H1 (cell line): ENCODE measurements at regions of chr15 and their contacts with region 1.

Region 1: DNA sequence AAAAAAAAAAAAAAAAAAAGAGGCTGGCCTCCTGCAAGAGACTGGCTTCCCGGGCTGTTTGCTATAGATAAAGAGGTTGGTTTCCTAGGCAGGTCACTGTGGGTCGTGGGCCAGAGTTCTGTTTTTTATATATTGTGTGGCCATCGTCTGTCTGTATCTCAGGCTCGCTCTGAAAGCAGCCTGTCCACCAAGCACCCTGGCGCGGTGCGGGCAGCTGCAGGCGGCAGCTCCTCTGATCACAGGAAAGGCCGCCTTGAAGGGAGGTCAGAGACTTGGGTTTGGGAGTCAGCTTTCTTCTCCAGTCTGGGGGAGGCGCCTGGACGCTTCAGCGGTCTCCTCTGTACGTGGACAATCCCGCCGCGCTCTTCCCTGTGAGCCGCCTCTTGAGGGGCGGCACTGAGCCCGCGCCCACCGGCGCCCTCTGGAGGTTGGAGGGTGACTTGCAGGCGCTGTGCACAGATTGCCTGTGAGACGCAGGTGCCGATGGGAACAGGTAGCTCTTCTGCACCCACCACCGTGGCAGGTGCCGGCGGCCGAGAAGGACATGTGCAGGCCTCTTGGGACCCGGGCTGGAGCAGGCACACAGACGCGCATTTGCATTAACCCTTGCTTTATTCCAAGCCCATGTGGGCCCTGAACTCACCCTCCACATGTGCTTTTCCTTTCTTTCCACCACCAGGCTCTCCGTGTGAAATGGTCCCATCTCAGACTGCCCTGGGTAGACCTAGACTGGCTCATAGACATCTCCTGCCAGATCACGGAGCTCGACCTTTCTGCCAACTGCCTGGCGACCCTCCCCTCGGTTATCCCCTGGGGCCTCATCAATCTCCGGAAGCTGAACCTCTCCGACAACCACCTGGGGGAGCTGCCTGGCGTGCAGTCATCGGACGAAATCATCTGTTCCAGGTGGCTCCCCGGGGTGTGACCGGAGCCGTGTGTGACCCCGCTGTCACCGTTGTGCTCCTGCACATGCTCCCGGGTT is 89.3 kb downstream of the LRRK1 start:
- DNase-seq: peak; percentile 61 to 99
- H3K4me3 ChIP-seq: peak overlapping the region; percentile 32 to 61 (median 54)
- H3K27ac ChIP-seq: no peak overlapping the region
- H3K4me1 ChIP-seq: peaks cover 0 to 4% (median 0%) of the 10 kb centered on the region in 4 experiments; a peak in 2 of 7 replicates
- H3K27me3 ChIP-seq: peaks cover 0 to 6% (median 0%) of the 10 kb centered on the region in 4 experiments; a peak in 3 of 7 replicates
- CTCF ChIP-seq: peak; percentile 96 to 98 (median 97)
- EP300 ChIP-seq: no peak
- POLR2A ChIP-seq: no peak
- RAD21 ChIP-seq: peak; percentile 48 to 67

Region 2: DNA sequence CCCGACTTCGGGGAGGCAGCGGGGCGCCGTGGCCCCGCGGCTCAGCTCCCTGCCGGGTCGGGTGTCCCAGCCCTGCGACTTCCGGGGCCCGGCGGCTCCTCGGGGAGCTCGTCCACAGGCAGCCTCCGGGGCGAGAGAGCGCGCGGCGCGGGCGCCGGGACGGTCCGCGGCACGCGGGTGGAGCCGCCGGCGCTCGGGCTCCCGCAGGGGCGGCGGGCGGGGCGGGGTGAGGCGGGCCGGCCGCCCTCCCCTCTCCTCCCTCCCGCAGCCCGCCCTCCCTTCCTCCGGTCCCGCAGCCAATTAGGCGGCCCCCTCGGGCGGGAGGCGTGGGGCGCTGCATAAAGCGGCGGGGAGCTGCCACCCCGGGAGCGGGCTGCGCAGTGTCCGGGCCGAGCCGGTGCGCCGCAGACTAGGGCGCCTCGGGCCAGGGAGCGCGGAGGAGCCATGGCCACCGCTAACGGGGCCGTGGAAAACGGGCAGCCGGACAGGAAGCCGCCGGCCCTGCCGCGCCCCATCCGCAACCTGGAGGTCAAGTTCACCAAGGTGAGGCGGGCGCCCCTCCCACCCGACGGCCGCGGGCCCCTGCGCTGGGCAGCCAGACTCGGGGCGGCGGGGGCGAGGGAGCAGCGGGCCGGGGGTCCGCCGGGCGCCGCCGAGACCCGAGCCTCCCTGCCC is 128.8 kb before region 1 on chr15 and contains the start of gene ALDH1A3:
- CTCF ChIA-PET with region 1: interaction called, 23 read pairs
- POLR2A ChIA-PET with region 1: no interaction called
- DNase-seq: no peak
- H3K4me3 ChIP-seq: peak within 1 kb of the TSS; percentile 37 to 59 (median 46)
- H3K27ac ChIP-seq: no peak within 1 kb of the TSS
- H3K4me1 ChIP-seq: peaks cover 0 to 13% (median 8%) of the 10 kb centered on the region in 4 experiments; a peak in 5 of 7 replicates
- H3K27me3 ChIP-seq: peaks cover 16 to 52% (median 48%) of the 10 kb centered on the region in 4 experiments
- CTCF ChIP-seq: no peak
- EP300 ChIP-seq: no peak
- POLR2A ChIP-seq: no peak
- RAD21 ChIP-seq: no peak
- total RNA-seq, gene ALDH1A3: 5.5 and 5.7 TPM in 2 replicates

Region 3: DNA sequence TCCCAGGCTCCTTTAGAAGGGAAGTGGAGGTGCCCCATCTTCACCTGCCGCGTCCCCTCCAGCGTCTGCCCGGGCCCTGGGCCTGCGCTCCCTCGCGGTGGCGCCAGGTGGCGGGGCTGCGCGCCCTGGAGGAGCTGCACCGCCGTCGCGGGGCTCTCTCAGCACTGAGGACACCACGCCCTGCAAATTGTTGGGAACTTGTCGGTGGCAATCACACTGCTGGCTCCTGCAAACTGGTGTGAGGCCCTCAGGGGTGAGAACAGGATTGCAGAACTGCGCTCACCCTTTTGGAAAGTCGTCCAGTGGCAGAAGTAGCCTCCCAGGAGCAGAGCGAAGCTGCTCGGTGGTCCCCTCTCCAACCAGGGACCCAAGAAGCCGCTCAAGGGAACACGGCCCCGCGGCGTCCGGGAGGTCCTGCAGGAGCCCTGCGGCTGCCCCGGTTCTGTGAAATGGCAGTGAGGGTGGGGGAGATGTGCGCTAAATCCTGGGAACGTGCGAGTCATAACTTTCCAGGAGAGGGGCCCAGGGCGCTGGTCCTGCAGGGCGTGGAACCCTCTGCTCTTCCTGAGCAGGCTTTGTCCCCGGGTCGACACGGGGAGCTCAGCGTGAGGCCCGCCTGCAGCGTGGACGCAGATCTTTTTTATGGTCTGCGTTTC is 90.3 kb before region 1 on chr15:
- CTCF ChIA-PET with region 1: interaction called, 405 read pairs
- POLR2A ChIA-PET with region 1: interaction called, 12 read pairs
- DNase-seq: peak in 1 of 2 experiments; percentile 94
- H3K4me3 ChIP-seq: peak overlapping the region; percentile 42 to 68 (median 48)
- H3K27ac ChIP-seq: no peak overlapping the region
- H3K4me1 ChIP-seq: peaks cover 0 to 6% (median 1%) of the 10 kb centered on the region in 4 experiments; a peak in 4 of 7 replicates
- H3K27me3 ChIP-seq: peaks cover 31 to 59% (median 48%) of the 10 kb centered on the region in 4 experiments
- CTCF ChIP-seq: peak; percentile 88 to 97 (median 93)
- EP300 ChIP-seq: peak in 1 of 2 experiments; percentile 52; a peak in 1 of 3 replicates
- POLR2A ChIP-seq: no peak
- RAD21 ChIP-seq: peak; percentile 84 to 86

Region 4: DNA sequence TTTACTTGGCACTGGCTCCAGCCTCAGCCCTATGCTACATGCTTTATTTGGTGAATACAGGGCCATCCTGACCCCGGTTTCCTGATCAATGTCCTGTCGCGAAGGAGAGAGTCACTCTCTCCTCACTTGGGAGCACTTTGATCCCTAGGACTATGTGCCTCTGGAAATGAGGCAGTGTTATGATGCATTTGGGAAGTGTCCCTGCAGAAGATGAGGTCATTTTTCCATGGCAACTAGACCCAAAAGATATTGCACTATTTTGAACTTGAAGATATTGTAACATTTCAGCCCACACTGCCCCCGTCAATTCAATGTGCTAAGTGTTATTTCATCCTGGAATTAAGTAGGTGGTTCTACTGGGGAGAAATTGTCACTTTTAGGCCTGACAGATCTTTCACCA is 21.3 kb before region 1 on chr15:
- CTCF ChIA-PET with region 1: interaction called, 53 read pairs
- POLR2A ChIA-PET with region 1: no interaction called
- DNase-seq: no peak
- H3K4me3 ChIP-seq: no peak overlapping the region
- H3K27ac ChIP-seq: no peak overlapping the region
- H3K4me1 ChIP-seq: peaks cover 0 to 2% (median 0%) of the 10 kb centered on the region in 4 experiments; a peak in 1 of 7 replicates
- H3K27me3 ChIP-seq: no peaks in the 10 kb centered on the region; a peak in 1 of 7 replicates
- CTCF ChIP-seq: no peak
- EP300 ChIP-seq: no peak
- POLR2A ChIP-seq: no peak
- RAD21 ChIP-seq: no peak

Region 5: GRCh38 chr15:101062471-101063171 is 54.2 kb after region 1 on chr15:
- CTCF ChIA-PET with region 1: interaction called, 16 read pairs
- POLR2A ChIA-PET with region 1: interaction called, 3 read pairs
- DNase-seq: peak in 1 of 2 experiments; percentile 63
- H3K4me3 ChIP-seq: no peak overlapping the region
- H3K27ac ChIP-seq: no peak overlapping the region
- H3K4me1 ChIP-seq: peaks cover 13 to 33% (median 21%) of the 10 kb centered on the region in 4 experiments
- H3K27me3 ChIP-seq: no peaks in the 10 kb centered on the region
- CTCF ChIP-seq: no peak
- EP300 ChIP-seq: no peak
- POLR2A ChIP-seq: no peak
- RAD21 ChIP-seq: no peak

Region 6: GRCh38 chr15:101156509-101157159 is 148.2 kb after region 1 on chr15:
- CTCF ChIA-PET with region 1: interaction called, 14 read pairs
- POLR2A ChIA-PET with region 1: no interaction called
- DNase-seq: no peak
- H3K4me3 ChIP-seq: no peak overlapping the region
- H3K27ac ChIP-seq: no peak overlapping the region
- H3K4me1 ChIP-seq: peaks cover 0 to 6% (median 0%) of the 10 kb centered on the region in 4 experiments; a peak in 3 of 7 replicates
- H3K27me3 ChIP-seq: peaks cover 0 to 2% (median 0%) of the 10 kb centered on the region in 4 experiments; a peak in 1 of 7 replicates
- CTCF ChIP-seq: no peak
- EP300 ChIP-seq: no peak
- POLR2A ChIP-seq: no peak
- RAD21 ChIP-seq: no peak